Naive thymus-derived CD4-positive, alpha-beta T cell (primary cell): ENCODE measurements at regions of chr5 and their contacts with region 1.

Region 1: DNA sequence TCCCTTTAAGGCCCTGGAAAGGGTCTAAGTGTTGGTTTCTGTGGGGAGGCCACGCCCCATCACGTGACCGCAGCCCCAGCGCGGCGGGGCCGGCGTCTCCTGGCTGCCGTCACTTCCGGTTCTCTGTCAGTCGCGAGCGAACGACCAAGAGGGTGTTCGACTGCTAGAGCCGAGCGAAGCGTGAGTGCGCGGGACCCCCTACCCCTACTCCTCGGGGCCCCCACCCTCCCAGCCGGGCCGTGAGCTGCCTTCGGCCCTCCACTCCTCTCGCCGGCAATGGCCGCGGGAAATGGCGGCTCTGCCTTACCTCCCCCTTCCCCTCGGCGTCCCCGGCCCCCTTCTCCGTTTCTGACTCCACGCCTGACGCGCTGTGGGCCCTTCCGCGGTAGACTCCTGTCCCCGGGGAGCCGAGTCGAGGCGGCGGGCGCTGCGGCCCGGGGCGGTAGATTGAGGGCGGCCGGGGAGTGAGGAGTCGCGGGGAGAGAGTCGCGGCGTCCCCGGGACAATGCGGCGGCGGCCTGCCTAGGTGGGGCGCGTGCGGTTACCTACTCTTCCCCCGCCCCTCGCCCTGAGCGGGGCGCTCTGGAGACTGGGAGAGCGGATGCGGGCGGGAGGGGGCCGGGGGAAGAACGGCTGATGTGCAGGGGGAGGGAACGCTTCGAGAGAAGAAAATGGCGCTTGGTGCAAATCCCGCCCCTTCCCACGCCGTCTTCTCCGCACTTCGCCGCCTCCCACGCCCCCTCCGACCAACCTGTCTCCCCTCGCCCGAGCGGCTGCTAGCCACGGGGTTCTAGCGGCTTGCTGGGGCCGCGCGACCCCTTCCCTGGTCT is at the start of gene SUB1:
- DNase-seq: peak; percentile 90 to 94 (median 93)
- ATAC-seq: peak; percentile 93
- H3K4me3 ChIP-seq: peak within 1 kb of the TSS; percentile 94
- H3K4me3 Mint-ChIP-seq: peak within 1 kb of the TSS; percentile 92 to 100 (median 98)
- H3K27ac ChIP-seq: peak within 1 kb of the TSS; percentile 100
- H3K27ac Mint-ChIP-seq: peak within 1 kb of the TSS; percentile 87 to 99 (median 98)
- H3K4me1 ChIP-seq: peaks cover 24 to 36% of the 10 kb centered on the region in 2 donors
- H3K4me1 Mint-ChIP-seq: peaks cover 42 to 72% (median 67%) of the 10 kb centered on the region in 7 donors
- H3K27me3 ChIP-seq: no peaks in the 10 kb centered on the region
- H3K27me3 Mint-ChIP-seq: peaks cover 0 to 2% (median 0%) of the 10 kb centered on the region in 5 donors
- total RNA-seq, gene SUB1: 187 to 388 (median 285) TPM

Region 2: GRCh38 chr5:32232441-32233219 is 353.0 kb before region 1 on chr5:
- CTCF ChIA-PET with region 1: interaction called, 15 read pairs
- POLR2A ChIA-PET with region 1: no interaction called
- intact Hi-C with region 1: loop called in 1 of 2 experiments (anchors 1 kb)
- DNase-seq: peak; percentile 45 to 73 (median 64)
- ATAC-seq: peak; percentile 88
- H3K4me3 ChIP-seq: no peak overlapping the region
- H3K4me3 Mint-ChIP-seq: no peak overlapping the region
- H3K27ac ChIP-seq: no peak overlapping the region
- H3K27ac Mint-ChIP-seq: peak overlapping the region; percentile 45 to 71 (median 62)
- H3K4me1 ChIP-seq: no peaks in the 10 kb centered on the region
- H3K4me1 Mint-ChIP-seq: peaks cover 0 to 12% (median 7%) of the 10 kb centered on the region in 7 donors
- H3K27me3 ChIP-seq: no peaks in the 10 kb centered on the region
- H3K27me3 Mint-ChIP-seq: no peaks in the 10 kb centered on the region

Region 3: GRCh38 chr5:32406650-32407049 is 179.0 kb before region 1 on chr5:
- CTCF ChIA-PET with region 1: no interaction called
- POLR2A ChIA-PET with region 1: interaction called, 3 read pairs
- intact Hi-C with region 1: loop called (anchors 5 kb)
- DNase-seq: no peak
- ATAC-seq: no peak
- H3K4me3 ChIP-seq: no peak overlapping the region
- H3K4me3 Mint-ChIP-seq: no peak overlapping the region
- H3K27ac ChIP-seq: no peak overlapping the region
- H3K27ac Mint-ChIP-seq: no peak overlapping the region
- H3K4me1 ChIP-seq: no peaks in the 10 kb centered on the region
- H3K4me1 Mint-ChIP-seq: peaks cover 0 to 11% (median 4%) of the 10 kb centered on the region in 7 donors
- H3K27me3 ChIP-seq: no peaks in the 10 kb centered on the region
- H3K27me3 Mint-ChIP-seq: no peaks in the 10 kb centered on the region

Region 4: GRCh38 chr5:32489791-32490582 is 95.7 kb before region 1 on chr5:
- CTCF ChIA-PET with region 1: interaction called, 153 read pairs
- POLR2A ChIA-PET with region 1: interaction called, 30 read pairs
- intact Hi-C with region 1: loop called (anchors 1 kb)
- DNase-seq: peak; percentile 40 to 72 (median 64)
- ATAC-seq: peak; percentile 82
- H3K4me3 ChIP-seq: no peak overlapping the region
- H3K4me3 Mint-ChIP-seq: no peak overlapping the region
- H3K27ac ChIP-seq: no peak overlapping the region
- H3K27ac Mint-ChIP-seq: peak overlapping the region in 4 of 9 donors; percentile 11 to 56 (median 31)
- H3K4me1 ChIP-seq: no peaks in the 10 kb centered on the region
- H3K4me1 Mint-ChIP-seq: peaks cover 0 to 11% (median 7%) of the 10 kb centered on the region in 7 donors
- H3K27me3 ChIP-seq: no peaks in the 10 kb centered on the region
- H3K27me3 Mint-ChIP-seq: no peaks in the 10 kb centered on the region

Region 5: DNA sequence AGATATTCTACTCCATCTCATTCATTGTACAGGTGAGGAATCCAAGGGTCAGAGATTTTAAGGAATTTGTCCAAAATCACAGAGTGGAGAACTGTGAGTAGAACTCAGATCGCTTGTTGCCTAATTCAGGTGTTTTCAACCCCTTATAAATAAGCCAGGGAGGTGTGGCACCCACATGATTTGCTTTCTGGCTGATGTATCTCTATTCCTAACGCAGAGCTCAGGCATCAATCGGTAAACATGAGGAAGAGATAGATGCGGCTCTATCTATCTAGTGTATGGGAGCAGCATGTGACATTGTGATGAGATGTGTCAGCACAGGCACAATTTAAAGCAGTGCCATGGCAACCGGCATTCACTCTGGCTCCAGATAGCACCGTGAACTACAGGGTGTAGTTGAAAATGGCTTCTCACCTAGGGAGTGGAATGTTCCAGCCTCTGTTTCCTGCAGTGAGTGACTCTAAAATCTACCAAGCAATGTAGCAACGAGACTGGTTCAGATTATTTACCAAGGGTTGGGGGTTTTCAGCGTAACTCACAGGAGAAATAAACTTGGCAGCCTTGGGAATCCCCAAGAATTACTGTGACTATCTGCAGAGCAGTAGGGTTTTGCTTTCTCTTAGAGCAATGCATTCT is 53.7 kb before region 1 on chr5:
- CTCF ChIA-PET with region 1: interaction called, 12 read pairs
- POLR2A ChIA-PET with region 1: interaction called, 8 read pairs
- intact Hi-C with region 1: loop called (anchors 1 kb)
- DNase-seq: peak in 8 of 9 donors; percentile 28 to 78 (median 53)
- ATAC-seq: peak; percentile 82
- H3K4me3 ChIP-seq: peak overlapping the region; percentile 56
- H3K4me3 Mint-ChIP-seq: peak overlapping the region; percentile 81 to 96 (median 88)
- H3K27ac ChIP-seq: peak overlapping the region; percentile 96
- H3K27ac Mint-ChIP-seq: peak overlapping the region; percentile 93 to 99 (median 95)
- H3K4me1 ChIP-seq: peaks cover 12 to 22% of the 10 kb centered on the region in 2 donors
- H3K4me1 Mint-ChIP-seq: peaks cover 8 to 70% (median 36%) of the 10 kb centered on the region in 7 donors
- H3K27me3 ChIP-seq: no peaks in the 10 kb centered on the region
- H3K27me3 Mint-ChIP-seq: no peaks in the 10 kb centered on the region

Region 6: GRCh38 chr5:32565145-32565544 is 20.5 kb before region 1 on chr5:
- CTCF ChIA-PET with region 1: no interaction called
- POLR2A ChIA-PET with region 1: no interaction called
- intact Hi-C with region 1: no loop called
- DNase-seq: no peak
- ATAC-seq: no peak
- H3K4me3 ChIP-seq: no peak overlapping the region
- H3K4me3 Mint-ChIP-seq: no peak overlapping the region
- H3K27ac ChIP-seq: no peak overlapping the region
- H3K27ac Mint-ChIP-seq: no peak overlapping the region
- H3K4me1 ChIP-seq: peaks cover 0 to 4% of the 10 kb centered on the region in 2 donors
- H3K4me1 Mint-ChIP-seq: peaks cover 0 to 24% (median 5%) of the 10 kb centered on the region in 7 donors
- H3K27me3 ChIP-seq: no peaks in the 10 kb centered on the region
- H3K27me3 Mint-ChIP-seq: no peaks in the 10 kb centered on the region

Region 7: GRCh38 chr5:32613050-32613672 is 27.5 kb after region 1 on chr5:
- CTCF ChIA-PET with region 1: interaction called, 8 read pairs
- POLR2A ChIA-PET with region 1: interaction called, 3 read pairs
- intact Hi-C with region 1: loop called in 1 of 2 experiments (anchors 2 kb)
- DNase-seq: peak; percentile 55 to 84 (median 75)
- ATAC-seq: peak; percentile 92
- H3K4me3 ChIP-seq: no peak overlapping the region
- H3K4me3 Mint-ChIP-seq: no peak overlapping the region
- H3K27ac ChIP-seq: no peak overlapping the region
- H3K27ac Mint-ChIP-seq: peak overlapping the region in 2 of 9 donors; percentile 6 to 20
- H3K4me1 ChIP-seq: no peaks in the 10 kb centered on the region
- H3K4me1 Mint-ChIP-seq: peaks cover 3 to 14% (median 6%) of the 10 kb centered on the region in 7 donors
- H3K27me3 ChIP-seq: no peaks in the 10 kb centered on the region
- H3K27me3 Mint-ChIP-seq: no peaks in the 10 kb centered on the region